Esophagus muscularis mucosa (tissue), 4 donors: ENCODE measurements at regions of chr9 and their contacts with region 1.

Region 1: GRCh38 chr9:76905791-76906650 is at the start of gene PRUNE2:
- DNase-seq: no peak
- H3K4me3 ChIP-seq: peak within 1 kb of the TSS; percentile 53 to 82 (median 65)
- H3K27ac ChIP-seq: peak within 1 kb of the TSS; percentile 78 to 91 (median 88)
- H3K4me1 ChIP-seq: peaks cover 14 to 29% (median 23%) of the 10 kb centered on the region in 4 donors
- H3K27me3 ChIP-seq: no peaks in the 10 kb centered on the region
- CTCF ChIP-seq: no peak
- EP300 ChIP-seq: no peak
- POLR2A ChIP-seq: peak; percentile 95
- total RNA-seq, gene PRUNE2: 586 to 728 (median 654) TPM

Region 2: GRCh38 chr9:76818271-76818670 is 87.8 kb before region 1 on chr9:
- intact Hi-C with region 1: loop called (anchors 5 kb)
- DNase-seq: no peak
- H3K4me3 ChIP-seq: no peak overlapping the region
- H3K27ac ChIP-seq: peak overlapping the region; percentile 78 to 93 (median 85)
- H3K4me1 ChIP-seq: peaks cover 0 to 64% (median 54%) of the 10 kb centered on the region in 4 donors
- H3K27me3 ChIP-seq: no peaks in the 10 kb centered on the region
- CTCF ChIP-seq: no peak
- EP300 ChIP-seq: no peak
- POLR2A ChIP-seq: no peak

Region 3: GRCh38 chr9:76846297-76846696 is 59.7 kb before region 1 on chr9:
- intact Hi-C with region 1: no loop called
- DNase-seq: peak; percentile 19
- H3K4me3 ChIP-seq: no peak overlapping the region
- H3K27ac ChIP-seq: peak overlapping the region; percentile 71 to 81 (median 76)
- H3K4me1 ChIP-seq: peaks cover 0 to 37% (median 30%) of the 10 kb centered on the region in 4 donors
- H3K27me3 ChIP-seq: no peaks in the 10 kb centered on the region
- CTCF ChIP-seq: no peak
- EP300 ChIP-seq: no peak
- POLR2A ChIP-seq: no peak

Region 4: GRCh38 chr9:76859860-76860259 is 46.2 kb before region 1 on chr9:
- intact Hi-C with region 1: loop called (anchors 5 kb)
- DNase-seq: no peak
- H3K4me3 ChIP-seq: no peak overlapping the region
- H3K27ac ChIP-seq: peak overlapping the region in 3 of 4 donors; percentile 6 to 39 (median 23)
- H3K4me1 ChIP-seq: peaks cover 0 to 63% (median 44%) of the 10 kb centered on the region in 4 donors
- H3K27me3 ChIP-seq: no peaks in the 10 kb centered on the region
- CTCF ChIP-seq: no peak
- EP300 ChIP-seq: no peak
- POLR2A ChIP-seq: no peak

Region 5: GRCh38 chr9:76985581-76985980 is 79.6 kb after region 1 on chr9:
- intact Hi-C with region 1: no loop called
- DNase-seq: no peak
- H3K4me3 ChIP-seq: no peak overlapping the region
- H3K27ac ChIP-seq: no peak overlapping the region
- H3K4me1 ChIP-seq: peaks cover 0 to 4% (median 0%) of the 10 kb centered on the region in 4 donors
- H3K27me3 ChIP-seq: no peaks in the 10 kb centered on the region
- CTCF ChIP-seq: no peak
- EP300 ChIP-seq: no peak
- POLR2A ChIP-seq: no peak

Region 6: DNA sequence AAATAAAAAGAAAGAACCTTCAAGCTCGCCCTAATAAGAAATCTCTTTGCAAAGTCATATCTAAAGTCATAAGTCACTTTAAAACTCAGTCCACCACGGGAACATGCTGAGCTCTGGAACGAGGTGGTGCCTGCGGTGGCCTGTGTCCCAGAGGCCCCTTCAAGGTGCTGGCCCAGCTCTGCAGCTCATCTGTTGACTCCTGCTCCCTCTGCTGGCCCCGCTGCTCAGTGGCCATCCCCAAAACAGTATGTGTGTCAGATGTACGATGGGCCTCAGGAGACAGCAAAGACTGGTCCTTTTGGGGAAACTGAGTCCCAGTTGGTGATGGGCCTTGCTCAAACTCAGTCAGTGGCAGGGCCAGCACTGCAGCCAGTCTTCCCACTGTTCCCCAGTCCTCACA is 90.7 kb after region 1 on chr9:
- intact Hi-C with region 1: loop called (anchors 5 kb)
- DNase-seq: no peak
- H3K4me3 ChIP-seq: no peak overlapping the region
- H3K27ac ChIP-seq: no peak overlapping the region
- H3K4me1 ChIP-seq: peaks cover 0 to 10% (median 6%) of the 10 kb centered on the region in 4 donors
- H3K27me3 ChIP-seq: no peaks in the 10 kb centered on the region
- CTCF ChIP-seq: peak; percentile 63 to 74 (median 74)
- EP300 ChIP-seq: no peak
- POLR2A ChIP-seq: no peak